Left lung (tissue), 14 donors: ENCODE measurements at regions of chr1 and their contacts with region 1.

Region 1: GRCh38 chr1:156601122-156601830 is at the start of gene GPATCH4:
- DNase-seq: peak; percentile 83 to 87 (median 84)
- ATAC-seq: peak; percentile 93
- H3K4me3 ChIP-seq: peak within 1 kb of the TSS; percentile 64 to 77
- H3K27ac ChIP-seq: peak within 1 kb of the TSS; percentile 72 to 80
- H3K4me1 ChIP-seq: peaks cover 10 to 27% of the 10 kb centered on the region in 2 donors
- H3K27me3 ChIP-seq: no peaks in the 10 kb centered on the region
- CTCF ChIP-seq: no peak
- polyA plus RNA-seq, gene GPATCH4: 26.9 to 35.1 (median 29.0) TPM

Region 2: GRCh38 chr1:156456622-156457465 is 144.4 kb before region 1 on chr1:
- intact Hi-C with region 1: loop called in 1 of 2 experiments (anchors 10 kb)
- DNase-seq: peak; percentile 89 to 99 (median 98)
- ATAC-seq: peak; percentile 94
- H3K4me3 ChIP-seq: peak overlapping the region; percentile 51 to 59
- H3K27ac ChIP-seq: peak overlapping the region; percentile 94 to 99
- H3K4me1 ChIP-seq: peaks cover 0 to 17% of the 10 kb centered on the region in 2 donors
- H3K27me3 ChIP-seq: no peaks in the 10 kb centered on the region
- CTCF ChIP-seq: no peak

Region 3: DNA sequence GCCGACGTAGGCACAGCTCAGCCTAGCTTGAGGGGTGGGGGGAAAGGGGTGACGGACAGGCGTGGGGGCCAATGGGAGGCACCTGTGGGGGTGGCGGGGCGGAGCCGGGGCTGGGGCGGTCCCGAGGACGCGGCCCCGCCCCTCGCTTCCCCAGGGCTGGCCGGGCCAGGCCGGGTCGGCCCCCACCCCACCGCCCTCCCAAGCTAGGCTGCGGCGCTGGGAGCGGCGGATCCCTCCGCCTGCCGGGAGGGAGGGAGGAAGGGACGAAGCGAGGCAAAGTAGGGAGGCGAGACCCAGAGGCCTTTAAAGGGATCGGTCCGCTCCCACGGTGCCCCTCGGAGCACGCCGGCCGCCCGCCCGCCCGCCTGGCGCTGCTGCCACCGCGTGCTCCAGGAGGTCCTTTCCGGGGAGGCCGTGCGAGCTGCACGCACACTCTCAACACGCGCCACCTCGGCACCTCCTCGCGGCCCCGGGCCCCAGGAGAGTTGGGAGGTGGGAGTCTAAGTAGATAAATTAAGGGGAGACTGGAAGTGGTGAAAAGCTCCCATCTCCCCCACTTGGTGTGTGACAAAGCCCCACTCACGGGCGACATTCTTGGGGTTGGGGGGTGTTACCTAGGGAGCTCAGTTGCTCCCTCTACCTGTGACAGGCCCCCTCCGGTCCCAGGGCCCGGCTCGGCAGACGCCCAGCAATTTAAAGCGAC is 100.3 kb before region 1 on chr1:
- intact Hi-C with region 1: no loop called
- DNase-seq: peak; percentile 95 to 97 (median 96)
- ATAC-seq: peak; percentile 81
- H3K4me3 ChIP-seq: peak overlapping the region; percentile 93 to 99
- H3K27ac ChIP-seq: peak overlapping the region; percentile 98 to 100
- H3K4me1 ChIP-seq: peaks cover 62 to 80% of the 10 kb centered on the region in 2 donors
- H3K27me3 ChIP-seq: no peaks in the 10 kb centered on the region
- CTCF ChIP-seq: peak in 1 of 2 donors; percentile 23

Region 4: DNA sequence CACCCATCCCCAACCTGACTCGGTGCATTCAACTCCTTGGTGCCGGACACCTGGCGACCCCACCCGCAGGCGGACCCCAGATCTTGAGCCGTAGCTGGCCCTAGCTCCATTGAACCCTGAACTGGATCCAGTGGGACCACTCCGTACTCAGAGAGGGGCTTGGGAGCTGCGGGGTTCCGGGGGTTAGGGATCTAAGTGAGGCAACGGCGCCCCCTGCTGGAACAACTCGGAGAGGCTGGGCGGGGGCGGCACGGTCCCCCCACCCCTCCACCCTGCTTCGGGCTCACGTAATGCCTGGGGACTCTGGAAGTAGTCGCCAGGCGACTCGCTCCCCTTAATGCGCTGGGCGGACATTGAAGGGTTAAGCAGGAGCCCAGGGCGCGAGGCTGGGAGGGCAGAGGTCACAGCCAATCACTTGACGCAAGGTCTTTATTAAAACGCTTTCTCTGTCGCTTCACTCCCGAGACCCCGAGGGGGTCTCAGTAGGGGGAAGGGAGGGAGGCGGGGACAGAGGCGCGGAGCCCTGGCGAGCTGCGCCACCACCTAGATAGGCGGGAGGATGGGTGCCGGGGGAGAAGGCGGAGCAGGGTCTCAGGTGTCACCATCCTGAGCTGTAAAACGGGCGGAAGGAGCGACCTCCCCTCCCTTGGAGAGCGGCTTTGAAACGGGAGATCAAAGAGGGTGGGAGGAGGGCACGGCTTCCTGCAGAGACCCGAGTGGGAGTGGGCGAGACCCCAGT is 104.8 kb after region 1 on chr1:
- intact Hi-C with region 1: no loop called
- DNase-seq: peak in 3 of 4 donors; percentile 59 to 78 (median 74)
- ATAC-seq: peak; percentile 75
- H3K4me3 ChIP-seq: peak overlapping the region; percentile 27 to 31
- H3K27ac ChIP-seq: peak overlapping the region in 1 of 2 donors; percentile 68
- H3K4me1 ChIP-seq: peaks cover 19 to 28% of the 10 kb centered on the region in 2 donors
- H3K27me3 ChIP-seq: peaks cover 22 to 72% of the 10 kb centered on the region in 2 donors
- CTCF ChIP-seq: peak; percentile 61 to 79

Region 5: DNA sequence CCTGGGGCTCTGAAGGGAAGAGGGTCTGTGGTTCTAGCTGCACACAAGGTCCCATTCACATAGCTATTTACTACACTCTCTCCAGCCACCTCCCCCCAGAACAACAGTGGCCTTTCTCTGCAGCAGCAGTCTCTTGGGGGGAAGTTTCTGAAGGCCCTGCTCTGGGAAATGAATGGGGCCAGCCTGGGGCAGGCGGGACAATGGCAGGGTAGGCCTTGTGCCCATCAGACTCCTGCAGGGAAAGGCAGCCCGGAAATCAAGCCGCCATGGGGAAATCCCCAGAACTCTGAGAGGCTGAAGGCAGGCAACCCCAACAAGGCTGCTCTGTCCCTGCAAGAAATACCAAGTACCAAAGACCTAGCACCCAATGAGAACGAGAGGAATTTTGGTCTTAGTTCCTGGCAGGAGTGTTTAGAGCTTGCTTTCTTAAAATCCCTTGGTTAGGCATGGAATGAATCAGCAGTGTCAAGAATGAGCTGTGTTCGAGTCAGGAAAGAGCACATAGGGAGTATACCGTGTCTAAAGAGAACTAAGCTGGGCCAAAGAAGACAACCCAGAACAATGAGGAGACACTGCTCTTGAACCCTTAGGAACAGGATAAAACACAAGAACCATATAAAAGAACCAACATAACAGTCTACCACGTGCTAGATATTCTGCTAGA is 433.0 kb after region 1 on chr1:
- intact Hi-C with region 1: no loop called
- DNase-seq: no peak
- ATAC-seq: no peak
- H3K4me3 ChIP-seq: no peak overlapping the region
- H3K27ac ChIP-seq: no peak overlapping the region
- H3K4me1 ChIP-seq: no peaks in the 10 kb centered on the region
- H3K27me3 ChIP-seq: no peaks in the 10 kb centered on the region
- CTCF ChIP-seq: no peak